ENCODE measurements at regions of chr3 and their contacts with region 1.

Region 1: GRCh38 chr3:73502609-73503583 is 121.8 kb downstream of the PDZRN3 start:
- DNase-seq: peak; percentile 54 to 80
- ATAC-seq: peak; percentile 77 to 88 (median 84)
- H3K4me3 ChIP-seq: peak overlapping the region; percentile 42
- H3K27ac ChIP-seq: peak overlapping the region; percentile 63
- H3K4me1 ChIP-seq: peaks cover 43% of the 10 kb centered on the region
- H3K27me3 ChIP-seq: no peaks in the 10 kb centered on the region
- CTCF ChIP-seq: peak; percentile 87

Region 2: GRCh38 chr3:73100741-73101559 is 401.9 kb before region 1 on chr3:
- intact Hi-C with region 1: loop called (anchors 1 kb)
- DNase-seq: peak; percentile 65 to 80
- ATAC-seq: peak; percentile 86 to 97 (median 93)
- H3K4me3 ChIP-seq: no peak overlapping the region
- H3K27ac ChIP-seq: no peak overlapping the region
- H3K4me1 ChIP-seq: no peaks in the 10 kb centered on the region
- H3K27me3 ChIP-seq: no peaks in the 10 kb centered on the region
- CTCF ChIP-seq: peak; percentile 95

Region 3: DNA sequence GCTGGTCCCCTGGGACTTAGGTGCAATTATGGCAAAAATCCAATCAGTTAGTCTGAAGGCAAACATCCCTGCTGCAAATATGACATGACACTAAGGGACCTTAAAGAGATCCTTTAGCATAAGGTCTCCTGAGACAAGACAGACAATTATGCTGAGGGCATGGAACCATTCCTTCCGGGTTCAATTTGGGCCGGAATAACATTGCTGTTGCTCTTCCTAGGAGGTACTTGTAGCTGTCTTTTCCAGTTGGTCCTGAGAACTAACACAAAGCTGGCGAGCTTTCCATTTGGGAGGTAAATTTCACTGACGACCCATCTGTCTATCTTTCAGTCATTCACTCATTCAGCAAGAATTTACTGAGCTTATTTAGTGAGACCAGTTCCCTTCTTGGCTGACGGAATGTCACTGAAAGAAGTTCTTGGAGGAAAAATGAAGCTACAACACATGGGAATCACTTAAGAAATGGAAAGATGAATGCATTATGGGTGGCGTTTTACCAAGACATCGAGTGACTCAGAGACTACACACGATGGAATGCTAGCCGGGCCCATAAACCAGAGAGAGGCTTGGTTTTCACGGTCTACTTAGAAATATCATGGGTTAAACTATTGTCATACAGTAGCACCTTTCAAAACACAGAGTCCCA is 93.7 kb before region 1 on chr3:
- intact Hi-C with region 1: no loop called
- DNase-seq: no peak
- ATAC-seq: peak in 2 of 4 donors; percentile 37 to 40
- H3K4me3 ChIP-seq: no peak overlapping the region
- H3K27ac ChIP-seq: no peak overlapping the region
- H3K4me1 ChIP-seq: peaks cover 46% of the 10 kb centered on the region
- H3K27me3 ChIP-seq: no peaks in the 10 kb centered on the region
- CTCF ChIP-seq: no peak

Region 4: DNA sequence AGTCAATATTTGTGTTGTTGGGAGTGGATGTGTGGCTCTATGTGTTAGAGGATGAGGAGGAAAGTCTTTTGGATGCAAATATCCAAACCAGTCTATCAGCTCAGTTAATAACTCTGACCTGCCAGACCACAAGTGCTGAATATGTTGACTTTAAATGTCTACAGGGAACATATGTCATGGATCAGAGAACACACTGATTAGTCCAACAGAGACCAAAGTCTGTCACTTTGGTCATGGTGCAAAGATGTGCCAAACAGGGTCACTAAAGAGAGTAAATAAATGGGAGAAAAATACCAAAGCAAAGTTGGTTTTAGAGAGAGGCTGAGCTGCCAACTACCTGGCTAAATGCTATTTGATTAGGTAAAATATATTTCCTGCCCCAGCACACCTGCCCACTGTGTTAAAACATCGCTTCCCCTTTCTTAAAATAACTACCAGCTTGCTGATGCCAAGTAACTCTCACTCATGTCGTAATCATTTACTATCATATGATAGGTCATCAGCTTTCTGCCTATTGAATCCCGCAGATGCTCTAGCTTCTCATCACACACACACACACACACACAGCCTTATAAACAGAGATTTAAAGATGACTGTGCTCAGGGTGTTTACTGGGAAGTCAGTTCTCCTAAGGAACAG is 51.5 kb before region 1 on chr3:
- intact Hi-C with region 1: loop called in 1 of 2 experiments (anchors 2 kb)
- DNase-seq: no peak
- ATAC-seq: peak; percentile 77 to 93 (median 86)
- H3K4me3 ChIP-seq: no peak overlapping the region
- H3K27ac ChIP-seq: peak overlapping the region; percentile 53
- H3K4me1 ChIP-seq: peaks cover 31% of the 10 kb centered on the region
- H3K27me3 ChIP-seq: no peaks in the 10 kb centered on the region
- CTCF ChIP-seq: no peak

Region 5: DNA sequence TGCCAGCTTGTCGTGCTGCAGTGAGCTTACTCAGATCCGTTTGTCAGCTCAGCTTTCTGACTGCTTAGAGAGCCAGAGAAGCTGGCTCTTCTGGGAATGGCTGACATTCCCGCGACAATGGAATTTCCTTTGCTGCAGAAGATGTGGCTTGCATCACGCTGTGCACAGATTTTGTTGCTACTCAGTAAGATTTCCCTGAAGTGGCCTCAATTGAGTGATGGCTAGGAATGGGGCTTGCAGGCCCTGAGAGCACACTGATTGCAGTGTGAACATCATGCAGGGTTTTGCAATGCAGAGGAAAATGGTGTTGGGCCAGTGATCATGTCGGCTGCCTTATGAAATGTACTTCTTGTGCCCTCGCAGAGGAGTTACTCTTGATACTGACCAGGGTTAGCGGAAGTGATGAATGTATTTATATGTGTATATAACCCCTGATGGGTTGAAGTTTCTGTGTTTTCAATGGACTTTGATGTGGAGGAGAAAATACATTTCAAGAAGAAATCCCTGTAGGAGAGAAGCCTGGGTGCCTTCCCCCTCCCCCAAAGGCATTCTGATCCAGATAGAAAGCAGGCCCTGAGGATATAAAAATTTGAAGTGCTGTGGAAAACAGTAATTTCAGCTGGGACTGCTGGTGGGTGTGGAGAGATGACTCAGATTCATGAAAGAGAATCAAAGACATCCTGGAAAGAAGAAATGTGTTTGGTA is 224.4 kb after region 1 on chr3:
- intact Hi-C with region 1: loop called in 1 of 2 experiments (anchors 10 kb)
- DNase-seq: peak; percentile 46 to 50
- ATAC-seq: peak in 3 of 4 donors; percentile 51 to 68 (median 54)
- H3K4me3 ChIP-seq: no peak overlapping the region
- H3K27ac ChIP-seq: peak overlapping the region; percentile 60
- H3K4me1 ChIP-seq: peaks cover 36% of the 10 kb centered on the region
- H3K27me3 ChIP-seq: no peaks in the 10 kb centered on the region
- CTCF ChIP-seq: no peak